ENCODE measurements at regions of chr11 and their contacts with region 1.

Region 1: DNA sequence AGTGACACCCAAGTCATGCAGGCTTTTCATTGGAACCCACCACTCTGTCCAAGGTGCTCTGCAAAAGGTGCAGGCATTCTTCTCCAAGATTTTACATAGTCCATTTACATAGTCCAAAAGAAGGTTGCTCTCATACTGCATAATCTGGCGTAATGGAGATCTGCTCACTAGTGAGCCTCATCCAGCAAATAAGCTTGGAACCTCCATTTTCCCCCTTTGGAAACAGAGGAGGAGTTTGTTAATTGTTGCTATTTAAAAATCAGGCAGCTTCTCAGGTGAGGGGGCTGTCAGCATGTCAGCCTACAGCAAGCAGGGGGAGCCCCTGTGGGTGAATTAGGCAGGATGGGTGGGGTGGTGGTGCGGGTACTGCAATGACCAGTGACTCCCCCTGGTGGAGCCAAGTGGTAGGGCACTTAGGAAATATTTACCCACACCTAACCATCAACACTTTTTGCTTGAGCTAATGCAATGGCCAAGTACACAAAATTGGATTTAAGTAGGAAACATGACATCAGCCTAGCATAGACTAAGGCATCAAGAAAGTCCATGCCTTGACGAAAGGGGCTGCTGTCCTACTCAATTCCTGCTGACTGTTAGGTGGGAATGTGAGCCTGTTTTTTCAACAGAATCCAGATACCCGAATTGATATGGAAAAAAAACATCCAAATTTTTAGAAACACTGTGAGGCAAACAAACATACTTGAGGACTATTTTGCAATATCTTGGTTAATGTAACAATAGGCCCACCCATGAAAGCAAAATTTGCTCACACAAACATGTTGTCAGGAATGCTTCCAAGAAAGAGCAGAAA is 64.5 kb downstream of the AMBRA1 start:
- DNase-seq: no peak
- H3K4me3 ChIP-seq: no peak overlapping the region
- H3K27ac ChIP-seq: no peak overlapping the region
- H3K27me3 ChIP-seq: no peaks in the 10 kb centered on the region
- CTCF ChIP-seq: peak; percentile 96

Region 2: GRCh38 chr11:46392421-46393230 is 136.7 kb before region 1 on chr11:
- CTCF ChIA-PET with region 1: interaction called, 22 read pairs
- POLR2A ChIA-PET with region 1: no interaction called
- DNase-seq: peak; percentile 48
- H3K4me3 ChIP-seq: peak overlapping the region; percentile 48
- H3K27ac ChIP-seq: no peak overlapping the region
- H3K27me3 ChIP-seq: peaks cover 29% of the 10 kb centered on the region
- CTCF ChIP-seq: no peak

Region 3: GRCh38 chr11:46437122-46437689 is 92.1 kb before region 1 on chr11:
- CTCF ChIA-PET with region 1: interaction called, 14 read pairs
- POLR2A ChIA-PET with region 1: no interaction called
- DNase-seq: no peak
- H3K4me3 ChIP-seq: no peak overlapping the region
- H3K27ac ChIP-seq: no peak overlapping the region
- H3K27me3 ChIP-seq: no peaks in the 10 kb centered on the region
- CTCF ChIP-seq: no peak

Region 4: DNA sequence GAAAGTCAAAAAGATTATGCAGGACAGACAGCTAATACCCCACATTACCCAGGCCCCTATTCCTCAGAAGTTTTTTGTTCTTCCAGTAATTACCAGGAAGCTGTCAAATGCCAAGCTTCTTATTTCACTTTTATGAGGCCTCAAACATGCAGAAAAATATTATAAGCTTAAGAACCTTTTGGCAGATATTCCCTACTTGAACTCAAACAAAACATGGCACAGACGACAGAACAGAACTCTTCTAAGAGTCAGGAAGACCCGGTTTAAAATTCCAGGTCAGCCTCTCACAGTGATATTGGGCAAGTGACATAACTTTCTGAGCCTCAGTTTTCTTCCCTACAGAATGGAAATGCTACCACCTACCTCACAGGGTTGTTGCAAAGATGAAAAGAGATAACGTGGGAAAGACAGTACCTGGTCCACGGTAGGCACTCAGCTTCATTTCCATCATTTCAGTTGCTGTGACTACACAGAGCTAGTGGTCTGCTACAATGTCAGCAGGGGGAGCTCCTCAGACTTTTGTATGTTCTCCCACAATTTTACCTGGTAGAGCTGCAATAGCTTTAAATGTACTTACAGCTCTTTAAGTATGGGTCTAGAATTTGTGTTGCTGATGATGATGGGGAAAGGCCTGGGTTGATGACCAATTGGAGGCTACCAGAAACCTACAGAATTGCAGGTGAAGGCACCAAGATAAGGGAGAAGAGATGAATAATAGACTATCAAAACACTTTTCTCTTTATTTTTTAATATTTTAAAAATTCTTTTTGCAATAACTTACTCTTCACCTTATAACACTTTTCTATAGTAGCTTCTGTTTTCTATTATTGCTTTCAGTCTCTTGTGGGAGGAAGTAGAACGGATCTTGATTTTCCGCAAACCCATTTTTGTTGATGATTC is 39.4 kb before region 1 on chr11:
- CTCF ChIA-PET with region 1: interaction called, 28 read pairs
- POLR2A ChIA-PET with region 1: no interaction called
- DNase-seq: peak; percentile 20
- H3K4me3 ChIP-seq: no peak overlapping the region
- H3K27ac ChIP-seq: no peak overlapping the region
- H3K27me3 ChIP-seq: no peaks in the 10 kb centered on the region
- CTCF ChIP-seq: peak; percentile 80

Region 5: GRCh38 chr11:46554205-46555055 is 25.1 kb after region 1 on chr11:
- CTCF ChIA-PET with region 1: interaction called, 11 read pairs
- POLR2A ChIA-PET with region 1: no interaction called
- DNase-seq: peak; percentile 30
- H3K4me3 ChIP-seq: no peak overlapping the region
- H3K27ac ChIP-seq: peak overlapping the region; percentile 72
- H3K27me3 ChIP-seq: no peaks in the 10 kb centered on the region
- CTCF ChIP-seq: no peak

Region 6: DNA sequence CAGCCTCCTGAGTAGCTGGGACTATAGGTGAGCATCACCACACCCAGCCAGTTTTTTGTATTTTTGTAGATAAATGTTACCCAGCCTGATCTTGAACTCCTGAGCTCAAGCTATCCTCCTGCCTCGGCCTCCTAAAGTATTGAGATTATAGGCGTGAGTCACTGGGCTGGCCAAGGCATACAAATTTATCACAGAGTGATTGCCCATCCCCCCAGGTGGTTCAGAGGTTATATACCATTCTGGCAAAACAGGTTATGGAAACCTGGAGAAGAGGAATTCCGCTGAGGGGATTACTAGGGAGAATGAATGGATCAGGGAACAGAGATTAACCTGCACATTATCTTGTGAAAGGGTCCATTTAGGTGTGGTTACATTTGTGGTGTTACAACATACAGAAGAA is 96.1 kb after region 1 on chr11:
- CTCF ChIA-PET with region 1: no interaction called
- POLR2A ChIA-PET with region 1: no interaction called
- DNase-seq: no peak
- H3K4me3 ChIP-seq: no peak overlapping the region
- H3K27ac ChIP-seq: no peak overlapping the region
- H3K27me3 ChIP-seq: no peaks in the 10 kb centered on the region
- CTCF ChIP-seq: no peak